ENCODE measurements at regions of chr9 and their contacts with region 1.

Region 1: GRCh38 chr9:17462869-17463464 is 115.9 kb upstream of the SH3GL2 start:
- DNase-seq: peak; percentile 29
- H3K4me3 ChIP-seq: no peak overlapping the region
- H3K27ac ChIP-seq: no peak overlapping the region
- H3K4me1 ChIP-seq: no peaks in the 10 kb centered on the region
- H3K27me3 ChIP-seq: no peaks in the 10 kb centered on the region
- CTCF ChIP-seq: peak; percentile 65

Region 2: DNA sequence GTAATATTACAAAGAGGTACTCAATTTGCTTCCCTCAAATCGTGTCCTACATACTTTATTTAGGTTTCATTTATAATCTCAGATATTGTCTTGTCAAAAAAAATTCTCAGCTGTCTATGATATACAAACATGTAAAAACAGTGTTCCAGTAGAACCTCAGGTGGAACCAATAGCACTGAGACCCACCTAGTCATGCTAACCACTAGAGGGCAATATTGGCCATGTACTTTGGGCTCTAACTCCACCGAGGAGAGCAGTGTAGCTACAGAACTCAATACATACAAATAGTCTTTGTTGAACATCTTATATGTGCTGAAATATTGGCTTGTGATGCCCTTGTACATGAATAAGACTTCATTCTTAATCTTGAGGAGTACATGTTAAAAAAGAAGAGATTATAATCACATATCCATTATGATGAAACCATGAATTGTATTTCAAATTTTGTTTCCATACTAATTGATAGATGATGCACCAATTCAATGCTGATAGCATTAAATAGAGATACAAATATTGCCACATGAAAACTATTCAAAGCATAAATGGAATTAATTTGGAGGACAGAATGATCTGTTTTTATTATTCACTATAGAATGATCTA is 399.3 kb before region 1 on chr9:
- intact Hi-C with region 1: loop called (anchors 5 kb)
- DNase-seq: peak; percentile 21
- H3K4me3 ChIP-seq: no peak overlapping the region
- H3K27ac ChIP-seq: no peak overlapping the region
- H3K4me1 ChIP-seq: no peaks in the 10 kb centered on the region
- H3K27me3 ChIP-seq: no peaks in the 10 kb centered on the region
- CTCF ChIP-seq: peak; percentile 42

Region 3: DNA sequence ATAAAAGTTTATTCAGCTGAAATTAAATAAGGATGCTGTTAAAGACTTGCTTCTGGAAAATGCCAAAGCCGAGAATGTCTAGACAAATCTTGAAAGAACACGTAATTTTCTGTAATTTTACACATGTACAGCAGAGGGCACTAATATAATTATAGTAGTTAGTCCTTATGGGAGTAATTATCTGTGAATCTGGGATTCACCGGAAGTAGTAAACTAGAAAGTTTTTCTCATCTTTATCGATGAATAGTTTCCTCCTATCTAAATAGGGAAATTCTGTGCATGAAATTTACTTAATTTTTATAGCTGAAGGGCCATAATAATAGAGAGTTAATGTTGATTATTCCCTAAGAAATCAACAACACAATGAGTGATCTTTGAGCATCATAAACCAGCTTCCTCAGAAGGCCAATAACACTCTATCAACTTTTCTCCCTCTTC is 346.5 kb before region 1 on chr9:
- intact Hi-C with region 1: loop called (anchors 5 kb)
- DNase-seq: no peak
- H3K4me3 ChIP-seq: no peak overlapping the region
- H3K27ac ChIP-seq: no peak overlapping the region
- H3K4me1 ChIP-seq: no peaks in the 10 kb centered on the region
- H3K27me3 ChIP-seq: no peaks in the 10 kb centered on the region
- CTCF ChIP-seq: peak; percentile 46

Measured in colonic mucosa (tissue), 4 donors.